ENCODE measurements at regions of chr9 and their contacts with region 1.

Region 1: GRCh38 chr9:123375469-123376132 is 19.6 kb downstream of the CRB2 start:
- DNase-seq: peak; percentile 82 to 86
- H3K4me3 ChIP-seq: no peak overlapping the region
- H3K4me3 Mint-ChIP-seq: peak overlapping the region; percentile 17
- H3K27ac Mint-ChIP-seq: peak overlapping the region; percentile 79
- H3K4me1 ChIP-seq: peaks cover 32% of the 10 kb centered on the region
- H3K4me1 Mint-ChIP-seq: peaks cover 32% of the 10 kb centered on the region
- H3K27me3 ChIP-seq: no peaks in the 10 kb centered on the region
- H3K27me3 Mint-ChIP-seq: no peaks in the 10 kb centered on the region
- CTCF ChIP-seq: no peak

Region 2: GRCh38 chr9:123360161-123361085 is 15.2 kb before region 1 on chr9:
- CTCF ChIA-PET with region 1: interaction called, 5 read pairs
- POLR2A ChIA-PET with region 1: no interaction called
- intact Hi-C with region 1: loop called (anchors 1 kb)
- DNase-seq: peak; percentile 98
- H3K4me3 ChIP-seq: no peak overlapping the region
- H3K4me3 Mint-ChIP-seq: no peak overlapping the region
- H3K27ac Mint-ChIP-seq: peak overlapping the region; percentile 71
- H3K4me1 ChIP-seq: peaks cover 33% of the 10 kb centered on the region
- H3K4me1 Mint-ChIP-seq: peaks cover 15% of the 10 kb centered on the region
- H3K27me3 ChIP-seq: no peaks in the 10 kb centered on the region
- H3K27me3 Mint-ChIP-seq: no peaks in the 10 kb centered on the region
- CTCF ChIP-seq: no peak

Region 3: DNA sequence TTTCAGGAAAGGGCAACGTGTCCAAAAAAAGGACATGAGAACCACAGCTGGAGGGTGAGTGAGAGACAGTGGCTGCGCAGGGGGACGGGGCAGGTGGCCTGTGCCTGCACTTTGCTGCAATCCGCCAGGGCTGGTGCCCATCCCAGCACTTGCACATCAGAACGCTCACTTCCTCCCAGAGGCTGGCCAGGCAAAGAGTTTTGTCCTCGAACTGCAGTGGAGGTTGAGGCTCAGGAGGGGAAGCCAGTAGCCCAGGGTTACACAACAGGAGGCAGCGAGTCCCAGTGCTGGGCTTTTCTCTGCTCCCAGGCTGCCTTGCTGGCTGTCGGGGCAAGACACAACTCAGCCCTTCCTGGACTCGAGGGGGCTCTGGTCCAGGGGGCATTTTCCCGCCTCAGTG is 13.5 kb after region 1 on chr9:
- CTCF ChIA-PET with region 1: interaction called, 3 read pairs
- POLR2A ChIA-PET with region 1: no interaction called
- intact Hi-C with region 1: loop called (anchors 1 kb)
- DNase-seq: no peak
- H3K4me3 ChIP-seq: no peak overlapping the region
- H3K4me3 Mint-ChIP-seq: no peak overlapping the region
- H3K27ac Mint-ChIP-seq: no peak overlapping the region
- H3K4me1 ChIP-seq: no peaks in the 10 kb centered on the region
- H3K4me1 Mint-ChIP-seq: no peaks in the 10 kb centered on the region
- H3K27me3 ChIP-seq: no peaks in the 10 kb centered on the region
- H3K27me3 Mint-ChIP-seq: no peaks in the 10 kb centered on the region
- CTCF ChIP-seq: no peak

Region 4: GRCh38 chr9:123414946-123415821 is 39.6 kb after region 1 on chr9:
- CTCF ChIA-PET with region 1: no interaction called
- POLR2A ChIA-PET with region 1: no interaction called
- intact Hi-C with region 1: no loop called
- DNase-seq: no peak
- H3K4me3 ChIP-seq: no peak overlapping the region
- H3K4me3 Mint-ChIP-seq: no peak overlapping the region
- H3K27ac Mint-ChIP-seq: no peak overlapping the region
- H3K4me1 ChIP-seq: no peaks in the 10 kb centered on the region
- H3K4me1 Mint-ChIP-seq: no peaks in the 10 kb centered on the region
- H3K27me3 ChIP-seq: no peaks in the 10 kb centered on the region
- H3K27me3 Mint-ChIP-seq: no peaks in the 10 kb centered on the region
- CTCF ChIP-seq: no peak

Measured in Caco-2 (cell line).